ENCODE measurements at regions of chr3 and their contacts with region 1.

Region 1: GRCh38 chr3:190414297-190414696 is 26.3 kb downstream of the CLDN16 start:
- DNase-seq: no peak
- H3K4me3 ChIP-seq: no peak overlapping the region
- H3K27ac ChIP-seq: no peak overlapping the region
- H3K4me1 ChIP-seq: no peaks in the 10 kb centered on the region
- H3K27me3 ChIP-seq: no peaks in the 10 kb centered on the region
- CTCF ChIP-seq: no peak
- POLR2A ChIP-seq: no peak

Region 2: DNA sequence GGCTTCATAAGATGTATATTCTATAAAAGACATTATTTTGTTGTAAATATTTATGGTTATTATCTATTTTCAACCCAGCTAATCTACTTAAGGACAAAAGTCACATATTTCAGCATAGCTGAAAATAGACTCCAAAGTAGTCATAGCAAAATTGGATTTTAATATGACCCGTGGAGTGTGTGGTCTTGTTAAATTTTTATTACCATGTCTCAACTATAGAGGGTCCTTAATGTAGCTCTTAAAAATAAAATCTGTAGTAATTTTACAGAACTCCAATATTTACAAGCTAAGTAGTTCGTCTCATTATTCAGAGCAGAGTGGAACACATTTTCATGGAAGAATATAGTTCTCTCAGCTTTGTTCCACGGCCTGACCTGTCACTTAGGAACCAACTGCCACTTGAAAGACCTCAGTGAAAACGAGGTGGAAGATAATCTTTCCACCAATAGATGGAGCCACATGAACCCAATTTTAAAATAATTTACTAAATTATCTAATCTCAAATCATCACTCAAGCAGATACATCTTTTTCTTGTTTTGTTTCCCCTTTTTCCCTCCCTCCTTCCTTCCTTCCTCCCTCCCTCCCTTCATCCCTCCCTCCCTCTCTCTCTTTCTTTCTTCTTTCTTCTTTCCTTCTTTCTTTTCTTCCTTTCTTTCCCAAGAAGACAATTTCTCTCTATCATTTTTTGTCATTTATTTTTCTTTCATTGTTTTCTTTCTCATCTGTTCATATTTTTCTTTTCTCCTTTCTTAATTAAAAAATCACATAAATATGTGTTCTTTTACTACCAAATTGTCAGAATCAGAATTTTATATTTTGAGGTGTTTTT is 189.2 kb before region 1 on chr3:
- intact Hi-C with region 1: loop called in 1 of 2 experiments (anchors 10 kb)
- DNase-seq: peak in 1 of 7 donors; percentile 40
- H3K4me3 ChIP-seq: no peak overlapping the region
- H3K27ac ChIP-seq: no peak overlapping the region
- H3K4me1 ChIP-seq: no peaks in the 10 kb centered on the region
- H3K27me3 ChIP-seq: no peaks in the 10 kb centered on the region
- CTCF ChIP-seq: peak; percentile 34 to 79 (median 56)
- POLR2A ChIP-seq: no peak

Region 3: GRCh38 chr3:190339130-190339529 is 75.2 kb before region 1 on chr3:
- intact Hi-C with region 1: no loop called
- DNase-seq: no peak
- H3K4me3 ChIP-seq: no peak overlapping the region
- H3K27ac ChIP-seq: no peak overlapping the region
- H3K4me1 ChIP-seq: peaks cover 0 to 9% of the 10 kb centered on the region in 2 donors
- H3K27me3 ChIP-seq: no peaks in the 10 kb centered on the region
- CTCF ChIP-seq: peak in 1 of 6 experiments; percentile 18
- POLR2A ChIP-seq: no peak

Measured in adrenal gland (tissue), 19 donors.